Mammary epithelial cell (primary cell): ENCODE measurements at regions of chr15 and their contacts with region 1.

Region 1: GRCh38 chr15:66558300-66558699 is 7.5 kb downstream of the LCTL start:
- DNase-seq: no peak
- H3K4me3 ChIP-seq: no peak overlapping the region
- H3K27ac ChIP-seq: no peak overlapping the region
- H3K4me1 ChIP-seq: no peaks in the 10 kb centered on the region
- H3K27me3 ChIP-seq: no peaks in the 10 kb centered on the region
- CTCF ChIP-seq: no peak

Region 2: GRCh38 chr15:66654739-66655375 is 96.6 kb after region 1 on chr15:
- CTCF ChIA-PET with region 1: no interaction called
- dilution Hi-C with region 1: loop called (anchors 5 kb)
- in situ Hi-C with region 1: no loop called
- intact Hi-C with region 1: no loop called
- DNase-seq: no peak
- H3K4me3 ChIP-seq: no peak overlapping the region
- H3K27ac ChIP-seq: no peak overlapping the region
- H3K4me1 ChIP-seq: no peaks in the 10 kb centered on the region
- H3K27me3 ChIP-seq: peaks cover 2% of the 10 kb centered on the region
- CTCF ChIP-seq: no peak